Activated CD4-positive, alpha-beta T cell treated with anti-CD3 and anti-CD28 coated beads, Interleukin-2, amount 10 ng/mL, durations not matched to agents 24 days and 14 days (primary cell): ENCODE measurements at regions of chr2 and their contacts with region 1.

Region 1: GRCh38 chr2:237572021-237572741 is 5.8 kb downstream of the PRLH start:
- DNase-seq: peak; percentile 95
- H3K4me3 Mint-ChIP-seq: no peak overlapping the region
- H3K27ac Mint-ChIP-seq: no peak overlapping the region
- H3K4me1 Mint-ChIP-seq: peaks cover 5% of the 10 kb centered on the region
- H3K27me3 Mint-ChIP-seq: no peaks in the 10 kb centered on the region

Region 2: GRCh38 chr2:237122214-237122666 is 449.9 kb before region 1 on chr2:
- intact Hi-C with region 1: loop called (anchors 1 kb)
- DNase-seq: peak; percentile 78
- H3K4me3 Mint-ChIP-seq: no peak overlapping the region
- H3K27ac Mint-ChIP-seq: peak overlapping the region; percentile 30
- H3K4me1 Mint-ChIP-seq: peaks cover 3% of the 10 kb centered on the region
- H3K27me3 Mint-ChIP-seq: peaks cover 2% of the 10 kb centered on the region

Region 3: GRCh38 chr2:237421542-237422116 is 150.6 kb before region 1 on chr2:
- intact Hi-C with region 1: loop called (anchors 5 kb)
- DNase-seq: peak; percentile 93
- H3K4me3 Mint-ChIP-seq: peak overlapping the region; percentile 74
- H3K27ac Mint-ChIP-seq: peak overlapping the region; percentile 75
- H3K4me1 Mint-ChIP-seq: peaks cover 31% of the 10 kb centered on the region
- H3K27me3 Mint-ChIP-seq: peaks cover 5% of the 10 kb centered on the region

Region 4: GRCh38 chr2:237512774-237513466 is 59.3 kb before region 1 on chr2:
- intact Hi-C with region 1: loop called (anchors 1 kb)
- DNase-seq: peak; percentile 91
- H3K4me3 Mint-ChIP-seq: no peak overlapping the region
- H3K27ac Mint-ChIP-seq: no peak overlapping the region
- H3K4me1 Mint-ChIP-seq: no peaks in the 10 kb centered on the region
- H3K27me3 Mint-ChIP-seq: peaks cover 2% of the 10 kb centered on the region

Region 5: DNA sequence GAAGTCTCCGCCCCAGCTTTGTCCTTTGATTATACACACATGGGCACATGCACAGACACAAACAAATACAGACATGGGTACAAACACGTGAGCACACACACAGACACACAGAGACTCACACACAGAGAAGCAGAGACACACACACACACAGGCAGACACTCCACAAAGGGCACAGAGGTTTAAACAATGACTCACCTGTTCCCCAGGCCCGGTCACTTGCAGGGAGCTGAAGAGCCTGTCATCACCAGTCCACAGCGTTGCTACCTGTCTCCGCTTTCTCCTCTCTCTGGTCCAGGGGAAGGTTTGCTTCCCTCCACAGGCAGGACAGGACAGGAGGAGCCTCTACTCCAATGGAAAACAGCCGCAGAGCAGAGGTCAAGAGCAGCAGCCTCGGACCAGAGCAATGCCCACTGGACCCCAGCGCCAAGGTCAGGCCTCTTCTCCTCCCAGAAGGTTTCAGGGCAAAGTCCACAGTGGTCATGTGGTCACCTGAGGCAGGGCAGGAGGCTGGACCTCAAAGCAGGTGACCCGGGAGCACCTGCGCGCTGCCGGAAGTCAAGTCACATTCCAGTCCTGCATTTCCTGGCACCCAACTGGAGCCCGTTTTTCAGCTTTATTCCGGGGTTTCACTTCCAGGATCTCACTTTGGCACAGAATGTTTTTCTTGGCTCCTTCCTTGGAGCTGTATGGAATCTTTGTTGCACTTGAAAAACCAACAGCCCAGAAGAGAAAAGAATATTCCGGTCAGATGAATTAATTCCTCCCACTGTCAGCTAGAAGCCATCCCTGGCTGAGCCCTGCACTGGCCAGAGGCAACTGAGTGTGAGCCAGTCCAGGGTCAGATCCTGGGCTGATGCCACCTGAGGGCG is 18.3 kb after region 1 on chr2 and contains the start of gene RAB17:
- intact Hi-C with region 1: no loop called
- DNase-seq: no peak
- H3K4me3 Mint-ChIP-seq: peak within 1 kb of the TSS; percentile 14
- H3K27ac Mint-ChIP-seq: peak within 1 kb of the TSS; percentile 32
- H3K4me1 Mint-ChIP-seq: peaks cover 10% of the 10 kb centered on the region
- H3K27me3 Mint-ChIP-seq: peaks cover 14% of the 10 kb centered on the region
- total RNA-seq, gene RAB17: 0.26 TPM in 1 of 2 replicates, not detected in the other

Region 6: DNA sequence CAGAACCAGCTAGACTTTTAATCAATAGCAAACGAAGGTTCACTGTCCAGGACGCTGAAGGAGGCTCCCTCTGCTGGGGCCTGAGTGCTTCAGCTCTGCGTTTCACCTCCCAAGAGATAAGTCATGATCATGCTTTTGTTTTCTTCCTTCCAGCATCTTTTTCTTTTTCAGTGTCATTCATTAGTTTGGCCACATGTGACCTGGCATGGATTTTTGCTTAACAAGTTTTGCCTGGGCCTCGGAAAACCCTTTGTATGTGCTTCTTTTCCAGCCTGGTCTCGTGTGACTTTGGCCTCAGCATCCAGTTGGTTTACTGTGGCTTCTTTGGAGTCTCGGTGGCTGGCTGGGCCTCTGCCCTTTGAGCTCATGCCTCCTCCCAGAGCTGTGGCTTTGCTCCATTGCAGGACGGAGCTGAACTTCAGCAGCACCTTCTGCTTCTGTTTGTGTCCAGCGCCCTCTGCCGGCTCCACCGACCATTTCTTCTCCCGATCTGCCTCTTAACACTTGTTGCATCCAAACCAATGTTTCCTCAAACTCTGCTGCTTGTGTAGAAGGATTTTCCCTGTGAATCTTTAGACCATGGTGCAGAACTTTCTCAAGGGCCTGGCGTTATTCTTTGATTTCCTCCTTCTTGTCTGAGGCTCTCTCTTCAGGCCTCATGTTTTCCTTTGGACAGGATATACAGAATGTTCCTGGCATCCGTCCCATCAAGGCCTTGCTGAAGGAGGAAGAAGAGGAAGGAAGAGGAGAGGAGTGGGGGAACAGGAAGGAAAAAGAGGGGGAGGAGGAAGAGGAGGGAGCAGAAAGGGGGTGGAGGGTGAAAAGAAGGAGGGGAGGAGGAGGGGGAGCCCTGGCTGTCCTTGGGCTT is 691.3 kb after region 1 on chr2:
- intact Hi-C with region 1: no loop called
- DNase-seq: peak; percentile 92
- H3K4me3 Mint-ChIP-seq: no peak overlapping the region
- H3K27ac Mint-ChIP-seq: no peak overlapping the region
- H3K4me1 Mint-ChIP-seq: peaks cover 11% of the 10 kb centered on the region
- H3K27me3 Mint-ChIP-seq: no peaks in the 10 kb centered on the region